ENCODE measurements at regions of chr1 and their contacts with region 1.

Region 1: GRCh38 chr1:110495926-110496600 is 22.9 kb downstream of the KCNA10 start:
- DNase-seq: no peak
- ATAC-seq: peak; percentile 96
- H3K4me3 ChIP-seq: no peak overlapping the region
- H3K27ac ChIP-seq: no peak overlapping the region
- H3K4me1 ChIP-seq: no peaks in the 10 kb centered on the region
- H3K27me3 ChIP-seq: no peaks in the 10 kb centered on the region; a peak in 1 of 4 replicates
- CTCF ChIP-seq: peak; percentile 91 to 93 (median 91)
- EP300 ChIP-seq: no peak
- POLR2A ChIP-seq: no peak
- RAD21 ChIP-seq: peak; percentile 94

Region 2: DNA sequence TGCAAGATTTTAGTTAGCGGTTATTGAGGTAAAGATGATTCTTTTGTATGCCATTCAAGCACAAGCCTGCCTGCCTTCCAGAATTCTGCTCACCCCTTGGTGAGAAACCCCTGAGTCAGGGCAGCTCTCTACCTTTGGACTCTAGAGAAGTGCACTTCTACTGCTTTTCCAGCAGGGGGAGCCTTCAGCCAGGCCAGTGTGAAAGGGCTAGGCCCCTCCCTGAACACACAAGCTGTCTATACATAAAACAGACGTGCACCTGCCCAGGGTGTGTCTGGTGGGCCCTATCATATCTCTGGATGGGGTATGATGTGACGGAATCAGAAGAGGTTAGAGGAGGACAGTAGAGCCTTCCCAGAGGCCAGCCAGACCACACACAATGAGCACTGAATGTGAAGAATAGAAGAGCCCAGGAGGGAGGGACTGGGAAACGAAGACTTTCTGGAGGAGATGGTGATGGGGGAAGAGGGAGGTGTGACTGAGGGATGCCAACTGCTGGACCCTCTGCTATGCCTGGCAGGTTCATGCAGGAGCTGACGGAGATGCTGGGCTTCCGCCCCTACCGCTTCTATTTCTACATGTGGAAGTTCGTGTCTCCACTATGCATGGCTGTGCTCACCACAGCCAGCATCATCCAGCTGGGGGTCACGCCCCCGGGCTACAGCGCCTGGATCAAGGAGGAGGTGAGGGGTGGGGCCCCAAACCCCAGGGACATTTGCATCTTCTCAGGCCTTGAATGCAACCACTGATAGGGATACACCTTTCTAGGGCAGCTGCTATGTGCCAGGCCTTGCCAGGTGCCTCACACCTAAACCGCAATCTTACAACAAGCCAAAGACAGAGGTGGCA is 298.9 kb before region 1 on chr1:
- CTCF ChIA-PET with region 1: interaction called, 71 read pairs
- POLR2A ChIA-PET with region 1: no interaction called
- RAD21 ChIA-PET with region 1: interaction called, 8 read pairs
- SMC1A ChIA-PET with region 1: interaction called, 28 read pairs
- in situ Hi-C with region 1: no loop called
- intact Hi-C with region 1: no loop called
- DNase-seq: no peak
- ATAC-seq: peak; percentile 98
- H3K4me3 ChIP-seq: no peak overlapping the region
- H3K27ac ChIP-seq: no peak overlapping the region
- H3K4me1 ChIP-seq: no peaks in the 10 kb centered on the region
- H3K27me3 ChIP-seq: peaks cover 0 to 2% of the 10 kb centered on the region in 2 experiments; a peak in 2 of 4 replicates
- CTCF ChIP-seq: peak; percentile 87 to 92 (median 91)
- EP300 ChIP-seq: no peak
- POLR2A ChIP-seq: no peak
- RAD21 ChIP-seq: peak; percentile 61

Region 3: GRCh38 chr1:110312188-110313121 is 183.6 kb before region 1 on chr1:
- CTCF ChIA-PET with region 1: interaction called, 14 read pairs
- POLR2A ChIA-PET with region 1: no interaction called
- RAD21 ChIA-PET with region 1: interaction called, 10 read pairs
- SMC1A ChIA-PET with region 1: interaction called, 6 read pairs
- in situ Hi-C with region 1: no loop called
- intact Hi-C with region 1: no loop called
- DNase-seq: peak; percentile 19
- ATAC-seq: peak; percentile 100
- H3K4me3 ChIP-seq: no peak overlapping the region
- H3K27ac ChIP-seq: no peak overlapping the region
- H3K4me1 ChIP-seq: no peaks in the 10 kb centered on the region
- H3K27me3 ChIP-seq: no peaks in the 10 kb centered on the region
- CTCF ChIP-seq: peak; percentile 93
- EP300 ChIP-seq: no peak
- POLR2A ChIP-seq: no peak
- RAD21 ChIP-seq: peak; percentile 97

Region 4: DNA sequence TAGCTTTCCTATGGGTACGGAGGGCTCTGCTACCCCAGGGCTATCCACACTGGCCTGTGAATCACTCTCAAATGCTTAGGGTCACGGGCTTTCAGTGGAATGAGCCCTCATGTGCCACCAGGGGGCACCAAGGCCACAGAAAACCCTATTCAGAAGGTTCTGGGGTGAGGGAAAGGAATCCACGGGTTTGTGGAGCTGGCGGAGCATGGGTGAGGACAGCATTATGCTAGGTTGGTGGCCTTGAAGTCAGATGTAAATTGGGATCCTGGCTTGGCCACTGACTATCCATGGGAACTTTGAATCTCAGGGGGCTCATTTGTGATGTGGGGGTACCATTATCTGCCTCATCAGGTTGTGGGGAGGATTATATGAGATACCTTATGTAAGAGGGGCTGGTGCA is 83.5 kb before region 1 on chr1:
- CTCF ChIA-PET with region 1: interaction called, 87 read pairs
- POLR2A ChIA-PET with region 1: interaction called, 3 read pairs
- RAD21 ChIA-PET with region 1: interaction called, 21 read pairs
- SMC1A ChIA-PET with region 1: interaction called, 13 read pairs
- in situ Hi-C with region 1: no loop called
- intact Hi-C with region 1: loop called (anchors 1 kb)
- DNase-seq: peak; percentile 24
- ATAC-seq: peak; percentile 88
- H3K4me3 ChIP-seq: no peak overlapping the region
- H3K27ac ChIP-seq: no peak overlapping the region
- H3K4me1 ChIP-seq: peaks cover 6% of the 10 kb centered on the region
- H3K27me3 ChIP-seq: peaks cover 0 to 2% of the 10 kb centered on the region in 2 experiments; a peak in 2 of 4 replicates
- CTCF ChIP-seq: peak; percentile 80 to 83 (median 83)
- EP300 ChIP-seq: no peak
- POLR2A ChIP-seq: no peak
- RAD21 ChIP-seq: peak; percentile 86

Region 5: DNA sequence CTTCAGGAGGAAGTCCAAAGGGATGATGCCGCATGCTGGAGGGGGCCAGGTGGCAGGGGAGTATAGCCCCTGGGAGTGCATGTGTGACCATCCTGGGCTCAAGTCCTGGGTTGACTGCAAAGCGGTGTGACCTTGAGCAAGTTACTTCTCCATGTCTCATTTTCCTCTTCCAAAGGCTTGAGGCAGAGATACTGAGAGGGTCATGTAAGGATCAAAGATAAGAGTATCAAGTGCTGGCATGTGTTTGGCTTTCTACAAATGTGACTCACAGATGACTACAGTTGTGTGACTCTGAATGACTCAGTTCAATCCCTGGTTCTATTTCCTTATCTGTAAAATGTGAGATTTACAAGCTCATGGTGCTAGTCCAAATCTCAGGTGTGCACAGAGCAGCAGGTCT is 19.0 kb before region 1 on chr1:
- CTCF ChIA-PET with region 1: interaction called, 15 read pairs
- POLR2A ChIA-PET with region 1: no interaction called
- RAD21 ChIA-PET with region 1: interaction called, 8 read pairs
- SMC1A ChIA-PET with region 1: interaction called, 4 read pairs
- in situ Hi-C with region 1: no loop called
- intact Hi-C with region 1: no loop called
- DNase-seq: no peak
- ATAC-seq: no peak
- H3K4me3 ChIP-seq: no peak overlapping the region
- H3K27ac ChIP-seq: no peak overlapping the region
- H3K4me1 ChIP-seq: no peaks in the 10 kb centered on the region
- H3K27me3 ChIP-seq: peaks cover 0 to 1% of the 10 kb centered on the region in 2 experiments; a peak in 2 of 4 replicates
- CTCF ChIP-seq: no peak
- EP300 ChIP-seq: no peak
- POLR2A ChIP-seq: no peak
- RAD21 ChIP-seq: no peak

Region 6: GRCh38 chr1:110542725-110543124 is 46.7 kb after region 1 on chr1:
- CTCF ChIA-PET with region 1: no interaction called
- POLR2A ChIA-PET with region 1: no interaction called
- RAD21 ChIA-PET with region 1: no interaction called
- SMC1A ChIA-PET with region 1: no interaction called
- in situ Hi-C with region 1: no loop called
- intact Hi-C with region 1: no loop called
- DNase-seq: no peak
- ATAC-seq: no peak
- H3K4me3 ChIP-seq: no peak overlapping the region
- H3K27ac ChIP-seq: no peak overlapping the region
- H3K4me1 ChIP-seq: no peaks in the 10 kb centered on the region
- H3K27me3 ChIP-seq: peaks cover 0 to 3% of the 10 kb centered on the region in 2 experiments; a peak in 2 of 4 replicates
- CTCF ChIP-seq: no peak
- EP300 ChIP-seq: no peak
- POLR2A ChIP-seq: no peak
- RAD21 ChIP-seq: no peak

Region 7: DNA sequence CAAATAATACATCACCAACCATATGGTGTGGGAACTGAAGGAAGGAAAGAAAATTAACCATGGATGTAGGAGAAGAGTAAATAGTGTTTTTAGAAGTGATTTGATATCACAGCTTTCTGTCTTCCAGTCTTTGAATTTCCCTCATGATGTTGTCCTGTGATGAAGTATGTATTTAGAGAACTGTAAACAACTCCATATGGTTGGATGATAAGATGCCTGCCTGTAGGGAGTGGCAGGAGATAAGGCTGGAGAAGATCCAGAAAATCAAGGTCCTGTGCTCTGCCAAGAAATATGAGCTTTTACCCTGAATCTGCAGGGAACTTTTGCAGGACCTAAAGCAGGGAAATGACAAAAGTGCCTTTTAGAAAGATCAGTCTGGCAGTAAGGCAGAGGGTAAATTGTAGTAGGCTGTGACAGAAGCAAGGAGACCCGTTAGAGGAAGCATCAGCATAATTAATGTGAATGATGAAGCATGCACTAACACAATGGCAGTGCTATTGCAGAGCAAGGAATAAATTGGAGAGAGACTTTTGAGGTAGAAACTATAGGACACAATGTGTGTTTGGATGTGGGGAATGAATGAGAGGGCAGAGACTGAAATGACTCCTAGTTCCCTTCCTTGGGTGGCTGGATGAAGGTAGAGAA is 665.9 kb after region 1 on chr1:
- CTCF ChIA-PET with region 1: no interaction called
- POLR2A ChIA-PET with region 1: no interaction called
- RAD21 ChIA-PET with region 1: no interaction called
- SMC1A ChIA-PET with region 1: no interaction called
- in situ Hi-C with region 1: no loop called
- intact Hi-C with region 1: no loop called
- DNase-seq: no peak
- ATAC-seq: no peak; the same call in 2 of the 3 replicates
- H3K4me3 ChIP-seq: no peak overlapping the region
- H3K27ac ChIP-seq: no peak overlapping the region
- H3K4me1 ChIP-seq: no peaks in the 10 kb centered on the region
- H3K27me3 ChIP-seq: no peaks in the 10 kb centered on the region
- CTCF ChIP-seq: no peak
- EP300 ChIP-seq: no peak
- POLR2A ChIP-seq: no peak
- RAD21 ChIP-seq: no peak

Measured in GM12878 (cell line).